ENCODE measurements at regions of chr12 and their contacts with region 1.

Region 1: DNA sequence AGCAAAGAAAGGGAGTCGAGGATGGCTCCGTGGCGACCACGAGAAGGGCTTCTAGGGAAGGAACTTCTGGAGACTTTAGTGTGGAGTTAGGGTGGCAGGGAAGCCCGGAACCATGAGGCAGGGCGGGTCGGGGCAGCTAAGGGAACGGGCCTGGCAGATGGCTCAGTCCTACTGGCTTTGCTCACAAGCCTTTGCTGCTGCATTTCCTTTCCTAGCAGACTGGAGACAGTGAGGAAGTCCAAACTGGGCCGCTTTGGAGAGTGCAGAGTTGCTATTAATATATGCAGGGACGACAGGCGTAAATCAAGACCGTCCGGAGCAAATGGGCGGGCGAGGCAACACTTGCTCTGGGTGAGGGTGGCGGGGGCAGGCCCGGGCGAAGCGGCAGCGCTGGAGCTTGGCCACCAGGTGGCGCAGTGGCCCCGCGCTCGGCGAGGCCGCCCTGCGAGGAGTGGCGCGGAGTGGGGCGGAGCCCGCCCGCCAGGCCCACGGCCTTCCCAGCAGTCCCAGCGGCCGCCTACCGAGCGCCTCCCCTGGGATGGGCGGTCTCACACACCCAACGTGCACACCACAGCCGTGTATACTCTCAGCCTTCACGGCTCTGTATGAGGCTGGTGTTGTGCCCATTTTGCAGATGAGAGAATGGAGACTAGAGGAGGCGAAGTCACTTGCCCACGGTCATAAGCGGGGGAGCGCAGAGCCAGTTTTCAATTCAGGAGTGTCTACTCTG is 24.4 kb upstream of the LRTM2 start:
- DNase-seq: peak; percentile 73
- ATAC-seq: peak; percentile 96
- H3K4me3 ChIP-seq: peak overlapping the region; percentile 62
- H3K27ac ChIP-seq: peak overlapping the region; percentile 62
- H3K4me1 ChIP-seq: peaks cover 7% of the 10 kb centered on the region
- H3K27me3 ChIP-seq: no peaks in the 10 kb centered on the region
- CTCF ChIP-seq: peak; percentile 81 to 97 (median 92); a peak in 5 of 6 replicates
- EP300 ChIP-seq: no peak
- POLR2A ChIP-seq: peak; percentile 90
- RAD21 ChIP-seq: peak; percentile 78

Region 2: DNA sequence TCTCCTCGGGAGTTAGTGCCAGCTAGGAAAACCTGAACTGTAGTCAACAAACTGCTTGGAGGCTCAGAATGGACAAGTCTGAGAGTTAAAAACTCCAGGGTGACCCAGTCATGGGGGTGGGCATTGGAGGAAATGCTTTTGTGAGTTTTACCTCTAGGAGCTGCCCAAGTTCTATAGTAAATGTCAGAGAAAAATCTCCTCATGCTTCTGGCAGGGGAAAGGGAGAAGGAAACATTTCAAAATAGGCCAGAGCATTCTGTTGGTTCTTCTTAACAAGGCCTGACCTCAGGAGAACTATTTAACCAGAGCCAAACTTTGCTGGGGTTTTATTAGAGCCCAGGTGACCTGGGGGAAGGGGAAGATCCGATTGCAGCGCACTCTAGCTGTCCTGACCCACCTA is 1145.0 kb before region 1 on chr12:
- CTCF ChIA-PET with region 1: no interaction called
- POLR2A ChIA-PET with region 1: no interaction called
- RAD21 ChIA-PET with region 1: no interaction called
- SMC1A ChIA-PET with region 1: no interaction called
- in situ Hi-C with region 1: no loop called
- intact Hi-C with region 1: no loop called
- DNase-seq: no peak
- ATAC-seq: peak; percentile 64
- H3K4me3 ChIP-seq: no peak overlapping the region
- H3K27ac ChIP-seq: no peak overlapping the region
- H3K4me1 ChIP-seq: peaks cover 30% of the 10 kb centered on the region
- H3K27me3 ChIP-seq: no peaks in the 10 kb centered on the region
- CTCF ChIP-seq: peak; percentile 27 to 38 (median 31); a peak in 4 of 6 replicates
- EP300 ChIP-seq: no peak
- POLR2A ChIP-seq: no peak
- RAD21 ChIP-seq: peak; percentile 57

Region 3: GRCh38 chr12:1650260-1650977 is 145.5 kb before region 1 on chr12:
- CTCF ChIA-PET with region 1: interaction called, 434 read pairs
- POLR2A ChIA-PET with region 1: interaction called, 5 read pairs
- RAD21 ChIA-PET with region 1: interaction called, 234 read pairs
- SMC1A ChIA-PET with region 1: interaction called, 202 read pairs
- in situ Hi-C with region 1: no loop called
- intact Hi-C with region 1: loop called (anchors 1 kb)
- DNase-seq: no peak
- ATAC-seq: no peak
- H3K4me3 ChIP-seq: no peak overlapping the region
- H3K27ac ChIP-seq: no peak overlapping the region
- H3K4me1 ChIP-seq: no peaks in the 10 kb centered on the region
- H3K27me3 ChIP-seq: no peaks in the 10 kb centered on the region
- CTCF ChIP-seq: no peak
- EP300 ChIP-seq: no peak
- POLR2A ChIP-seq: no peak
- RAD21 ChIP-seq: no peak

Region 4: DNA sequence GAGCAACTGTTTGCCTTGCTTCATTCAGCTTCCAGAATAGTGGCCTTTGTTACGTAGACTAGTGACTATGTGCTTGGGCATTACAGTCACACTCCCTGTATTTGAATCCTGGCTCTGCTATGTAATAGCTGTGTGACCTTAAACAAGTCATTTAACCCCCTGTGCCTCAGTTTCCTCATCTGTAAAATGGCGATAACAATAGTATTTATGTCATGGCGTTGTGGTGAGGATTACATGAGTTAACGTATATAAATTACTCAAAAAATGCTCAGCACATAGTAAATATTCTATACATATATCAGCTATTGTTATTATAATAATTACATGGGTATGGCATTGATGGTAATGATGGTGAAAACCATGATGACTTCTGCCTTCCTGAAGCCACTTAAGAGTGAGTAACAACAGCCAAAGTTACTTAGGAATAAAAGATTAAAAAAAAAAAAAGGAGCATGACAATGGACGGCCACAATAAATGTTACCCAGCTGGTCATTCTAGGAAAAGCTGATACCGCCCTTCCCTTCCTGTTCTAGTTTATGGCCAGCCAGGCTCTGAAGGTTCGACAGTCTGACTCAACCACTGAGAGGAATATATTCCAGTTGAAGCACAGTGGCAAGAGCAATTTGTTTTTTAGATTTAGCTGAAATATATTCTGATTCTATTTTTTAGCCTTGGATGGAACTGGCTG is 115.0 kb before region 1 on chr12:
- CTCF ChIA-PET with region 1: interaction called, 5 read pairs
- POLR2A ChIA-PET with region 1: no interaction called
- RAD21 ChIA-PET with region 1: no interaction called
- SMC1A ChIA-PET with region 1: interaction called, 12 read pairs
- in situ Hi-C with region 1: no loop called
- intact Hi-C with region 1: no loop called
- DNase-seq: no peak
- ATAC-seq: no peak
- H3K4me3 ChIP-seq: no peak overlapping the region
- H3K27ac ChIP-seq: no peak overlapping the region
- H3K4me1 ChIP-seq: no peaks in the 10 kb centered on the region
- H3K27me3 ChIP-seq: no peaks in the 10 kb centered on the region; a peak in 1 of 4 replicates
- CTCF ChIP-seq: no peak
- EP300 ChIP-seq: no peak
- POLR2A ChIP-seq: no peak
- RAD21 ChIP-seq: no peak

Region 5: GRCh38 chr12:1781772-1782171 is 14.2 kb before region 1 on chr12:
- CTCF ChIA-PET with region 1: interaction called, 21 read pairs
- POLR2A ChIA-PET with region 1: no interaction called
- RAD21 ChIA-PET with region 1: interaction called, 5 read pairs
- SMC1A ChIA-PET with region 1: interaction called, 11 read pairs
- in situ Hi-C with region 1: no loop called
- intact Hi-C with region 1: no loop called
- DNase-seq: no peak
- ATAC-seq: no peak
- H3K4me3 ChIP-seq: no peak overlapping the region
- H3K27ac ChIP-seq: no peak overlapping the region
- H3K4me1 ChIP-seq: no peaks in the 10 kb centered on the region
- H3K27me3 ChIP-seq: no peaks in the 10 kb centered on the region
- CTCF ChIP-seq: no peak
- EP300 ChIP-seq: no peak
- POLR2A ChIP-seq: no peak
- RAD21 ChIP-seq: no peak

Region 6: DNA sequence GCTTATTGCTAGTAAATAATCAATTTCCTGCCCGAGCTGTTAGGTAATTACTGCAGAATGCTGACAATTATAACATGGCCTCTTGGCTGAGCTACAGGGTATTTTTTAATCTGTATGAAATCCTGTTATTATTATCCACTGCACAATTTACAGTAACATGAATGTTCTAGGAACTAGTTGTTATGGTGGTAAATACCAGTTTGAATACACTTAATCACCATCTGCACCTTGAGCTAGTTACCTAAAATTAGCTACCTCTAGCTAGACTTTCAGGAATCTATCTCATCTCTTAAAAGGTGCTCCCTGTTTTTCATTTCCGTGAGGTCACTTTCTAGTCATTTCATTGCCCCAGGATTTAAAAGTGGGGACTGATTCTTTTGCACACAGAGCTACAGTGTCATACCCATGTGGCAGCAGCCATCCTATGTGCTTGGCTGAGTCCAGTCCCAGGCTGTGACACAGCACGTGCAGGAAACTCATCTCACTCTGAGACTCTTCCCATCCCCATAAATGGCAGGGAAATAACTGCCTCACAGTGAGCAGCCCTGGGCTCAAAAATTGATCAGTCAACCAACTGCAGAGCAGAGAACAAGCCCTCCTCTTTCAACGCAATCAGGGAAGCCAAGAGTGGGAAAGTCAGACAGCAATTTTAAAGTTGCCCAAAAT is 170.7 kb after region 1 on chr12:
- CTCF ChIA-PET with region 1: interaction called, 11 read pairs
- POLR2A ChIA-PET with region 1: no interaction called
- RAD21 ChIA-PET with region 1: no interaction called
- SMC1A ChIA-PET with region 1: no interaction called
- in situ Hi-C with region 1: no loop called
- intact Hi-C with region 1: no loop called
- DNase-seq: no peak
- ATAC-seq: no peak
- H3K4me3 ChIP-seq: no peak overlapping the region
- H3K27ac ChIP-seq: no peak overlapping the region
- H3K4me1 ChIP-seq: no peaks in the 10 kb centered on the region
- H3K27me3 ChIP-seq: no peaks in the 10 kb centered on the region
- CTCF ChIP-seq: no peak
- EP300 ChIP-seq: no peak
- POLR2A ChIP-seq: no peak
- RAD21 ChIP-seq: no peak

Region 7: DNA sequence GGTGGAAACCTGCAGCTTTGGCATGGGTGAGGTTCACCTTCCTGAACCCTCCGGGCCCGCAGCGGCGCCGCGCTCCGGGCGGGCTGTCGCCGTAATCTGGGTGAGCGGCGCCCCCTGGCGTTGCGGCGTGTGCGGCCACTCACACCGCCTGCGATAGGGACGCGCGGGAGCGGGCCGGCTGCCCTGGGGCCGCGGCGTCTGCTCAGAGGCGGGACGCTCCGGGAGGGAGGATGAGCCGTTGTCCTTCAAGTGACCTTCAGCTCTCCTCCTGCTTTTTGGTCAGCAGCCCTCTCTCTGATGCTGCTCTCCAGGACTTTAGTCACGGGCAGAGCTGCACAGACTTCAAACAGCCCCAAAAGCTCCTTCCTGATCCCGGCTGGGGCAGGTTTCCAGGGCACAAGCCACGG is 787.1 kb after region 1 on chr12:
- CTCF ChIA-PET with region 1: no interaction called
- POLR2A ChIA-PET with region 1: no interaction called
- RAD21 ChIA-PET with region 1: no interaction called
- SMC1A ChIA-PET with region 1: no interaction called
- in situ Hi-C with region 1: no loop called
- intact Hi-C with region 1: loop called (anchors 5 kb)
- DNase-seq: no peak
- ATAC-seq: peak; percentile 99
- H3K4me3 ChIP-seq: no peak overlapping the region
- H3K27ac ChIP-seq: no peak overlapping the region
- H3K4me1 ChIP-seq: no peaks in the 10 kb centered on the region
- H3K27me3 ChIP-seq: peaks cover 2 to 4% of the 10 kb centered on the region in 2 experiments
- CTCF ChIP-seq: peak; percentile 71 to 87 (median 73)
- EP300 ChIP-seq: no peak
- POLR2A ChIP-seq: no peak
- RAD21 ChIP-seq: peak; percentile 74

Measured in GM12878 (cell line).